Sciatic nerve (tissue), 2 donors: ENCODE measurements at regions of chr16 and their contacts with region 1.

Region 1: GRCh38 chr16:50245417-50246298 is 20.7 kb upstream of the ADCY7 start:
- DNase-seq: peak; percentile 66
- ATAC-seq: peak; percentile 65

Region 2: DNA sequence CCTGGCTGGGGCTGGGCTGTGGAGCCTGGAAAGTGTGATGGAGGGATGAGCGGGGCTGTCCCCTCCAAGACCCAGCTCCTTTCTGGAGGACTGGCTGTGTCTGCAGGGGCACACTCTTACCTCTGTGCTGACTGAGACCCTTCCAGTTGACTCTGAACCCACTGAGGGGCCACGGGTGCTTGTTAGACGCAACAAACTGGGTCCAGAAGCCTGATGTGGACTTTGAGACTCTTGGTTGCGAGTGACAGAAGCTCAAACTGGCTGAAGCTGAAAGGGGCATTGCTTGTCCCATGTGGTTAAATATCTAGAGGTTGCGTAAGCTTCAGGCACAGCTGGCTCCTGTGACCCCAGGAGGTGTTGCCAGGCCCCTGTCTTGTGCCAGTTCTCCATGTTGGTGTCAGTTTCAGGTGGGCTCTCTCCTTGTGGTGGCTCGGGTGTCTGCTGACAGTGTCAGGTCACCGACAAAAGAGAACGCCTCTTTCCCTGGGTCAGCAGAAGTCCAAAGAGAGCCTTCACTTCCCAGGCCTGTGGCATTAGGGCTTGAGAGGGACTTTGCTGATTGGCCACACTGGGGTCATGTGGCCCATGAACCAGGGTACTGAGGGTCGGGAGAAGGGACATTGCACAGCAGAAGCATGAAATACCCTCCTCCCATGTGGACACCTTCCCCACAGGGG is 37.4 kb after region 1 on chr16:
- intact Hi-C with region 1: loop called (anchors 1 kb)
- DNase-seq: no peak
- ATAC-seq: no peak